IMR-90 (cell line): ENCODE measurements at regions of chr12 and their contacts with region 1.

Region 1: GRCh38 chr12:15193946-15194345 is 27.3 kb downstream of the RERG start:
- DNase-seq: no peak
- ATAC-seq: no peak
- H3K4me3 ChIP-seq: no peak overlapping the region
- H3K27ac ChIP-seq: no peak overlapping the region
- H3K4me1 ChIP-seq: no peaks in the 10 kb centered on the region
- H3K27me3 ChIP-seq: no peaks in the 10 kb centered on the region
- CTCF ChIP-seq: no peak
- POLR2A ChIP-seq: no peak
- RAD21 ChIP-seq: no peak

Region 2: DNA sequence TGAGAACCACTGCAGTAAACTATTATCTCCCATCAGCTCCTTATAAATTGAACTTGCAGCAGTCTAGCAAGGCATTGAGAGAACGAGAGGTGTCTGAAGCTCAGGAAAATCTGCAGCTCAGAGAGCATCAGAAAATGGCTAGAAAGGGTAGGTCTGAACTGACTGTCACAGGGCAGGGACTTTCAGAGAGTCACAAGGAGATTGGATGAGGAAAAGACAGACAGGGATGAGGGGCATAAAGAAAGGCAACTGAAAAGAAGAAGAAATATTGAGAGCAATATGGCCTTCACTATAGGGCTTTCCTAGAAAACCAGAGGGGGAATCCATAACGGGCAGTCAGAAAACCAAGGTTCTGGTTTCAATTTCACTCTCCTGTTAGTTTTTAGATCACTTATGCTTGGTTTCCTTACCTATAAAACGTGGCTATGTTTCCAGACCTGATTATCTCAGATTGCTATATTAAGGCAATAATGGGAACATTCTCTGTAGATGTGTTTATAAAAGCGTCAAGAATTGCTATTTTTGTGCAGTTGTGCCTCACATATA is 180.2 kb before region 1 on chr12:
- CTCF ChIA-PET with region 1: no interaction called
- POLR2A ChIA-PET with region 1: no interaction called
- dilution Hi-C with region 1: no loop called
- in situ Hi-C with region 1: no loop called
- intact Hi-C with region 1: no loop called
- DNase-seq: no peak
- ATAC-seq: no peak
- H3K4me3 ChIP-seq: no peak overlapping the region
- H3K27ac ChIP-seq: no peak overlapping the region
- H3K4me1 ChIP-seq: no peaks in the 10 kb centered on the region
- H3K27me3 ChIP-seq: 0 out of 2 replicates have a peak, but pooled peaks cover 1% of the 10 kb centered on the region
- CTCF ChIP-seq: no peak
- POLR2A ChIP-seq: no peak
- RAD21 ChIP-seq: no peak

Region 3: GRCh38 chr12:15336768-15337553 is 143.0 kb after region 1 on chr12:
- CTCF ChIA-PET with region 1: no interaction called
- POLR2A ChIA-PET with region 1: no interaction called
- dilution Hi-C with region 1: no loop called
- in situ Hi-C with region 1: no loop called
- intact Hi-C with region 1: no loop called
- DNase-seq: peak; percentile 53
- ATAC-seq: peak; percentile 92
- H3K4me3 ChIP-seq: no peak overlapping the region
- H3K27ac ChIP-seq: no peak overlapping the region
- H3K4me1 ChIP-seq: peaks cover 3% of the 10 kb centered on the region; the same call in 1 of the 2 replicates
- H3K27me3 ChIP-seq: no peaks in the 10 kb centered on the region
- CTCF ChIP-seq: no peak
- POLR2A ChIP-seq: no peak
- RAD21 ChIP-seq: no peak

Region 4: GRCh38 chr12:15423629-15424028 is 229.7 kb after region 1 on chr12:
- CTCF ChIA-PET with region 1: no interaction called
- POLR2A ChIA-PET with region 1: interaction called, 10 read pairs
- dilution Hi-C with region 1: no loop called
- in situ Hi-C with region 1: no loop called
- intact Hi-C with region 1: no loop called
- DNase-seq: no peak
- ATAC-seq: no peak
- H3K4me3 ChIP-seq: no peak overlapping the region
- H3K27ac ChIP-seq: no peak overlapping the region
- H3K4me1 ChIP-seq: no peaks in the 10 kb centered on the region
- H3K27me3 ChIP-seq: no peaks in the 10 kb centered on the region
- CTCF ChIP-seq: no peak
- POLR2A ChIP-seq: no peak
- RAD21 ChIP-seq: no peak